ENCODE measurements at regions of chr18 and their contacts with region 1.

Region 1: GRCh38 chr18:57446322-57446721 is 11.1 kb downstream of the ONECUT2 start:
- DNase-seq: peak; percentile 28
- H3K4me3 Mint-ChIP-seq: no peak overlapping the region
- H3K27ac Mint-ChIP-seq: no peak overlapping the region
- H3K4me1 Mint-ChIP-seq: peaks cover 4% of the 10 kb centered on the region
- H3K27me3 Mint-ChIP-seq: peaks cover 54% of the 10 kb centered on the region

Region 2: DNA sequence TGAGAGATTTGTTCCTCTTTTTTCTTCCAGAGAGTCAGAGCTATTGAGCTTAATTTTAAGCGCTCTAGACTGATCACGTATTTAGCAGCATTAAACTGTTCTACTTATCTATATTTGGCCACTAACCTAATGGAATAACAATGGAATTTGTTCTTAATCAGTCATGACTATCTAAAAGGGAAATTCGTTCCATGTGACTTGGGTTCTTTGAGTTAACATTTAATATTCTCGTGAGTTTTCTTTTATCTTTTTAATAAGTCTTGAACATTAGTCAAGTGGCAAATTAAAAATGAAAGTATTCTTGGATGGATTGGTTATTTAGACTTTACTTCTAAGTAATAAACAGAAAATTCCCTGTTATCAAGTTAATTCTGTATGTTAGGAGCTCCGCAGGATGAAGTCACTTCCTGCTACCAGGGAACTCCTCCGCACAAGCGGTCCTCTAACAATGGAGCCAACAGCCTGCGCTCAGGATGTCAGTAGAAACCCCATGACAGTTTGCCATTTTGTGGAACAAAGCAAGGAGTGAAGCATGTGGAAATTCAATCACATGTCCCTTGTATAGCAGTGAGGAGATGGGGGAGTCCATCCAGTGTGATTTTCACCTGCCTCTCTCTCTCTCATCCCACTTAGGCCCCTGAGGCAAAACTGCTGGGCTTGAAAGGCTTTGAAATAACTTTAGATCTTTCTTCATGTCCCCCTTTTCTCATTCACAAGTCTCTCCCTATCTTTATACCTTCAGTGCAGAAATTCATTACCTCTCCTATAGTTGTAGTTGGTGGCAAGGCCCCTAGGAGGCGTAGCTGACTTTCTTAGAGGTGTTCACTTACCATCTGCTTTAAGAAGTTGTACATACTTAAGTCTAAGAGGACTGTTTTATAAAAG is 657.1 kb before region 1 on chr18:
- CTCF ChIA-PET with region 1: no interaction called
- POLR2A ChIA-PET with region 1: no interaction called
- intact Hi-C with region 1: loop called (anchors 10 kb)
- DNase-seq: peak; percentile 49
- H3K4me3 Mint-ChIP-seq: no peak overlapping the region
- H3K27ac Mint-ChIP-seq: no peak overlapping the region
- H3K4me1 Mint-ChIP-seq: no peaks in the 10 kb centered on the region
- H3K27me3 Mint-ChIP-seq: no peaks in the 10 kb centered on the region

Region 3: GRCh38 chr18:57480724-57481123 is 34.4 kb after region 1 on chr18:
- CTCF ChIA-PET with region 1: no interaction called
- POLR2A ChIA-PET with region 1: no interaction called
- intact Hi-C with region 1: no loop called
- DNase-seq: no peak
- H3K4me3 Mint-ChIP-seq: no peak overlapping the region
- H3K27ac Mint-ChIP-seq: no peak overlapping the region
- H3K4me1 Mint-ChIP-seq: no peaks in the 10 kb centered on the region
- H3K27me3 Mint-ChIP-seq: peaks cover 9% of the 10 kb centered on the region

Measured in activated CD4-positive, alpha-beta memory T cell treated with anti-CD3 and anti-CD28 coated beads for 36 hours (primary cell).